ENCODE measurements at regions of chr2 and their contacts with region 1.

Region 1: DNA sequence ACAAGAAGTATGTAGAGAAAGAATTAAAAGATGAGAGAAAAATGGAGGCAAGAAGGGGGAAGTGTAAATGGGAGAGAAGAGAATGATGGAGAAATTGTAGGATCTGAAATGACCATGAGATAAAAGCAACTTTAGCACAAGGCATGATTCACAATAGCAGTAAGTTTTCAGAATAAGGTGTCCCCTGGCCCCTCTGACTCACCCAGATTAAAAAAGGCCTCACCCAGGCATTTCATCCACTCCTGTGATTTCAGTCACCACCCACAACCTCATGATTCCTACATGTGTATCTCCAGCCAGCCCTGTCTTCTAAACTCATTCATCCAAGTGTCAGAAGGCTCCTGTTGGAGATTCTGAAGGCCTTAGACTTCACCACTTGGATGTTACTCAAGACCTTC is 56.6 kb downstream of the SP100 start:
- DNase-seq: no peak
- H3K4me3 ChIP-seq: no peak overlapping the region
- H3K27ac ChIP-seq: peak overlapping the region; percentile 23 to 85 (median 71)
- H3K4me1 ChIP-seq: peaks cover 9 to 44% (median 16%) of the 10 kb centered on the region in 6 donors
- H3K27me3 ChIP-seq: no peaks in the 10 kb centered on the region
- CTCF ChIP-seq: no peak
- POLR2A ChIP-seq: no peak

Region 2: DNA sequence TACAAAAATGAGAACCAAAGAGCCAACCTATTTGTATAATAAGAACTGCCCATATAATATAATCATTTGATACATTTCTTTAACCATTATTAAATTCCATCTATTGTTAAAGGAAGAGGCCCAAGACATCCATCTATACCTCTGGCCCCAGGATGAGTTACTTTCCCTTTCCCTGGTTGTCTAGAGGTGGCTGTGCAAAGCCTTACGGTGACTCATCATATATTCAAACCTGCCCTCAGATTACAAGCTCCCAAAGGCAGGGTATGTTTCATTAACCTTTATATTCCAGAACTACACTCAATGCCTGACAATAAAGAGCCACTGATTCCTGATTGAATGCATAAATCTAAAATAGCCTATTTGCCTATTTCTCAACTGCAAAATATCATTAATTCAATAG is 1095.8 kb before region 1 on chr2:
- intact Hi-C with region 1: no loop called
- DNase-seq: no peak
- H3K4me3 ChIP-seq: no peak overlapping the region
- H3K27ac ChIP-seq: no peak overlapping the region
- H3K4me1 ChIP-seq: no peaks in the 10 kb centered on the region
- H3K27me3 ChIP-seq: peaks cover 0 to 7% (median 0%) of the 10 kb centered on the region in 7 donors
- CTCF ChIP-seq: no peak
- POLR2A ChIP-seq: no peak

Region 3: DNA sequence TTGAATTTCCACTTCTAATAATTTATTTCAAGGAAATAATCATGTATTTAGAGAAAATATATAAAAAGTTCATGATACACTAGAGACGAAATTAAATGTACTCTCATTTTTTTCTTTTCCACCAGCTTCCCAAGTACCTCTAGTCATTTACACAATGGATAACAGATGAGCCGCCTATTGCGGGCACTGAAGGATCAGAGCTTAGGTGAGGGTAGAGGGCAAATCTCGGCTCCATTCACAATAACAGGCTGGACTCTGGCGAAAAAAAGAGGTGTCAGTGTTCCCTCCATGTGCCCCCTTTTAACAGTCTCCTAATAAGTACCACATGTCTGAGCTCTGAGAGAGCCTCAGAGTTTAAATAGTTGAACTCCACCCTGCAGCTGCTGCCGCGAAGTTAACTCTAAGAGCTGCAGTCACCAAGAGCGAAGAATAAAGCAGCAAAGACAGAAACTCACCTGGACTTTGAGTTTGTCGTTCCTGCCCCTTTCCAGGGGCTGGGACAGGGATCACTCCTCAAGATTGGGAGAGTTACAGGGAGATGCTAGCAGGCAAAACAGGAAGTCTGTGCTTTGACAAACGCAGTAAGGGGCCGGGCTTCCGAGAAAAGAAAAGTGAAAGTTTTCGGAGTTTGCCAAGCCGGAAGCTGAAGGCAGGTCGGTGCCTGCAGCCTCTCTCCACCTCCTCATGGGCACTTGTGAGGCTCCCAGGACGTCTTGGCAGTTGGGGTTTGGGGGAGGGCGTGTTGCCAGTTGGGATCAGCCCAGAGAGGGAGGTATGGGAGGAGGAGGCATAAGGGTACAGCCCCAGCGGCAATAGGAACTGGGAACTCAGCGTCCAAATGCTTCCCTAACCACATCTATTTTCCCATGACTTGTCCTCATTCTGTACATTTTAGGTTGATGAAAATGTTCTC is 252.9 kb before region 1 on chr2 and contains the start of gene SP110:
- intact Hi-C with region 1: no loop called
- DNase-seq: peak; percentile 93
- H3K4me3 ChIP-seq: peak within 1 kb of the TSS; percentile 54 to 90 (median 76)
- H3K27ac ChIP-seq: peak within 1 kb of the TSS; percentile 82 to 97 (median 92)
- H3K4me1 ChIP-seq: peaks cover 27 to 96% (median 70%) of the 10 kb centered on the region in 6 donors
- H3K27me3 ChIP-seq: no peaks in the 10 kb centered on the region
- CTCF ChIP-seq: peak in 2 of 11 experiments; percentile 25 to 41
- POLR2A ChIP-seq: peak in 1 of 3 donors; percentile 28
- total RNA-seq, gene SP110: 105 to 157 (median 135) TPM

Region 4: DNA sequence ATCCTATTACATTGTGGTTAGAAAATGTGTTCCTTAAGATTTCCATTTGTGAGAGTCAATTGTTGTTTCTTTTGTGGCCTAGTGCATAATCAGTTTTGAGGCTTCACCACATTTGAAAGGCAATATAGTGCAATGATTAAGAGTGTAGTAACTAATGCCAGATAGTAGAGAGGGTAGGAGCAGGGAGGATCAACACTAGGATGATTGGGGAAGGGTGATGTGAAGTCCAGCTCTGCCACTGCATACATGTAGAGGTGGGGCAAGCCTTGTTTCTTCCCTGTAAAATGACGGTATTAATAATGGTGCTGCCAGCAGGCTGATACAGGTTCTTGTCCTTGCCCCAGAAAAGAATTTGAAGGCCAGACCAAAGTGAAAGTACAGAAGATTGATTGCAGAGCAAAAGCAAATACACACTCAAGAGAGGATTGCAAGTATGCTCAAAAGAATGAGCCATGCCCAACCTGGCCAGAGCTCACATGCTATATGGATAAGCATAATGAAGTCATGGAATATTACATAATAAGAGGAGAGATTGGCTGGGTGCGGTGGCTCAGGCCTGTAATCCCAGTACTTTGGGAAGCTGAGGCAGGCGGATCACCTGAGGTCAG is 48.7 kb before region 1 on chr2:
- intact Hi-C with region 1: loop called (anchors 10 kb)
- DNase-seq: no peak
- H3K4me3 ChIP-seq: peak overlapping the region in 1 of 8 donors; percentile 31
- H3K27ac ChIP-seq: peak overlapping the region in 6 of 8 donors; percentile 9 to 66 (median 24)
- H3K4me1 ChIP-seq: peaks cover 60 to 93% (median 85%) of the 10 kb centered on the region in 6 donors
- H3K27me3 ChIP-seq: no peaks in the 10 kb centered on the region
- CTCF ChIP-seq: no peak
- POLR2A ChIP-seq: no peak

Measured in spleen (tissue), 13 donors.